ENCODE measurements at regions of chr4 and their contacts with region 1.

Region 1: DNA sequence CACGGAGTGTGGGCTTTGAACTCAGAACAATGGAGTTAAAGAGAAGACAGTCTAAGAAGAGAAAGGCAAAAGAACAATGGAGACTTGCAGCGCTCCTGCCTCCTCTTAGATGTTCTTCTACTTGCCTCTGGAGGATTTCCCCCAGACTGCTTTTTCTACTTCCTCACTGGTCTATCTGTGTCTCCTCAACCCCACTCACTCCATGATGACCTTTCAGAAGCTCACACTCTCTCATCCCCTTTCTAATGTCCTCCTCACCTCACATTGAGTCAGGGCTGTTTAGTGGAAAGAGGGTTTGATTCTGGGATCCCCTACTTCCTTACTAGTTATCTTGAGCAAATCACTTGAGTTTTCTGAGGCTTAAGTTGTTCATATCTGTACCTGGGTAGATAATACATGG is 12.2 kb upstream of the HERC6 start:
- DNase-seq: no peak
- H3K4me3 ChIP-seq: no peak overlapping the region
- H3K27ac ChIP-seq: no peak overlapping the region
- H3K4me1 ChIP-seq: no peaks in the 10 kb centered on the region
- H3K27me3 ChIP-seq: no peaks in the 10 kb centered on the region
- CTCF ChIP-seq: no peak
- EP300 ChIP-seq: no peak
- POLR2A ChIP-seq: no peak

Region 2: DNA sequence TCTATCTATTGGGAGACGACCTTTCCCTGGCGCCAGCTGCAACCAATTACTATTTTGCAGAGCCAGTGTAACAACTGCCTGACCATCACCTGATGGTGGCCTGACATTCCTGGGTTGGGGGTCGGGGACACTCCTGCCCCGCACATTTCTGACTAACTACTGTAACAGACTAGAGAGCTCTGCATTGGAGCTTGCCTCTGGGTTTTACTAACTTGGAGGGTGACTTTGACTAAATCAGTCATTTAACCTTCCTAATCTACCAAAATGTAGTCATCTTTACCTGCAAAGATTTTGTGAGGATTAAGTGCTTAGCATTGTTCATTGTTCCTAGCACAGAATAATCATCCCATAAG is 170.5 kb before region 1 on chr4:
- intact Hi-C with region 1: no loop called
- DNase-seq: no peak
- H3K4me3 ChIP-seq: no peak overlapping the region
- H3K27ac ChIP-seq: no peak overlapping the region
- H3K4me1 ChIP-seq: peaks cover 0 to 11% (median 3%) of the 10 kb centered on the region in 4 donors
- H3K27me3 ChIP-seq: no peaks in the 10 kb centered on the region
- CTCF ChIP-seq: no peak
- EP300 ChIP-seq: no peak
- POLR2A ChIP-seq: no peak

Region 3: GRCh38 chr4:88255111-88255510 is 111.3 kb before region 1 on chr4:
- intact Hi-C with region 1: no loop called
- DNase-seq: no peak
- H3K4me3 ChIP-seq: no peak overlapping the region
- H3K27ac ChIP-seq: no peak overlapping the region
- H3K4me1 ChIP-seq: no peaks in the 10 kb centered on the region
- H3K27me3 ChIP-seq: no peaks in the 10 kb centered on the region
- CTCF ChIP-seq: no peak
- EP300 ChIP-seq: no peak
- POLR2A ChIP-seq: no peak

Region 4: GRCh38 chr4:88465653-88466192 is 99.3 kb after region 1 on chr4:
- intact Hi-C with region 1: loop called (anchors 5 kb)
- DNase-seq: no peak
- H3K4me3 ChIP-seq: no peak overlapping the region
- H3K27ac ChIP-seq: no peak overlapping the region
- H3K4me1 ChIP-seq: no peaks in the 10 kb centered on the region
- H3K27me3 ChIP-seq: no peaks in the 10 kb centered on the region
- CTCF ChIP-seq: no peak
- EP300 ChIP-seq: no peak
- POLR2A ChIP-seq: no peak

Region 5: GRCh38 chr4:88635066-88635465 is 268.6 kb after region 1 on chr4:
- intact Hi-C with region 1: no loop called
- DNase-seq: no peak
- H3K4me3 ChIP-seq: no peak overlapping the region
- H3K27ac ChIP-seq: no peak overlapping the region
- H3K4me1 ChIP-seq: peaks cover 0 to 10% (median 5%) of the 10 kb centered on the region in 4 donors
- H3K27me3 ChIP-seq: no peaks in the 10 kb centered on the region
- CTCF ChIP-seq: no peak
- EP300 ChIP-seq: no peak
- POLR2A ChIP-seq: no peak

Measured in stomach (tissue), 19 donors.